Activated T-helper 2 cell treated with anti-CD3 and anti-CD28 coated beads, Interferon-gamma antibody, Interleukin-2, Interleukin-4, amounts not matched to agents 10 μg/mL and 5 μg/mL and 100 μg/mL, durations not matched to agents 14 hours and 24 hours and 36 hours (primary cell): ENCODE measurements at regions of chr20 and their contacts with region 1.

Region 1: GRCh38 chr20:59087829-59088433 is 45.3 kb upstream of the PRELID3B start:
- DNase-seq: peak; percentile 67
- H3K4me3 Mint-ChIP-seq: no peak overlapping the region
- H3K27ac Mint-ChIP-seq: no peak overlapping the region
- H3K4me1 Mint-ChIP-seq: peaks cover 1% of the 10 kb centered on the region
- H3K27me3 Mint-ChIP-seq: peaks cover 35% of the 10 kb centered on the region

Region 2: DNA sequence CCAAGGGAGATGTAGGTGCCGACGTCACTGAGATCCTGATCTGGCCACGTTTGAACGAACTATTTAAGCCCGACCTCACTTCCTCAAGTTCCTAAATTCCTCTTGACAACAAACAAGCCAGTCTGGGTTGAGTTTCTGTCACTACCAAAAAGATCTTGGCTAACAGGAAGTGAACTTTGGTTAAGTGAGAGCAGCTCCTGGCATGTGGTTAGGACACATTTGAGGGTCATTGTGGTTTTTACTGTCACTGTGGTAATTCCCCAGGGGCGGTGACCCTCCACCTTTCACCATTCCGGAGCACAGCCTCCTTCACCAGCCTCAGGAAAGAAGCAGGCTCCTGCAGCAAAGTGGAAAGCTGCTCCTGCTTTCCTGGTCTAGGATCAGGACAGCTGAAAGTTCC is 32.6 kb after region 1 on chr20:
- intact Hi-C with region 1: loop called (anchors 1 kb)
- DNase-seq: no peak
- H3K4me3 Mint-ChIP-seq: no peak overlapping the region
- H3K27ac Mint-ChIP-seq: peak overlapping the region; percentile 2
- H3K4me1 Mint-ChIP-seq: peaks cover 50% of the 10 kb centered on the region
- H3K27me3 Mint-ChIP-seq: peaks cover 4% of the 10 kb centered on the region

Region 3: DNA sequence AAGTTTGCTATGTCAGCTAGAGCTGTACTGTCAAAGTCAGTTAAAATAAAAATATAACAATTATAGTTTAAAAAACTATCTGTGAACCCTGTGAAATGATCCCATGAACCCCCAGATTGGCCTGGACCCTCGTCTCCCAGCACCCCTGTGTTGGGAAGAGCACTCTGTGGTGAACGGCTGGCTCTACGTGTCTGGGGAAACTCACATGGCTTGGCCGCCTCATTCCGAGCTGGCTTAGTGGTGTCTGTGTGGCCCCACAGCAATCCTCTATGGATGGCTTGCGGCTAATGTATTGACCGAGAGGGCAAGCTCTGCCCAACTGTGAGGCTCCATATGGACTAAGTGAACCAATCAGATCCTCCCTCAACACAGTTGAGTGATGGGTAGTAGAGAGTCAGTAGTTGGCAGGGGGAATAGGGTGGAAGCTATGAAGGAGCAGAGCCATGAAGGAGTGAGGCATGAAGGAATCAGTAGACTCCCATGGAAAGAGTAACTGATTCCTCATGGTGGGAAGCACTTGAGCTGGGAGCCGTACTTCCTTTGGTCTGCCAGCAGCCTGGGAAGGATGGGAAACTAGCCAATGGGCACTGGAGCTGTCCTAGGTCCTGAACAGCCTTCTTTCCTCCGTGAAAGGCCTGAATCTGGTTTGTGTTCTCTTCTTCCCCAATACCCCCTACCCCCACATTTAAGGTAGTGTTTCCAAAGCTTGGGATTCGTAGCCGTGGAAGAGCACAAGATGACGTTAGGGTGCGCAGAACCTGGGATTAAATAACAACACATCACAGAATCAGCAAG is 54.1 kb after region 1 on chr20:
- intact Hi-C with region 1: no loop called
- DNase-seq: no peak
- H3K4me3 Mint-ChIP-seq: no peak overlapping the region
- H3K27ac Mint-ChIP-seq: no peak overlapping the region
- H3K4me1 Mint-ChIP-seq: peaks cover 37% of the 10 kb centered on the region
- H3K27me3 Mint-ChIP-seq: peaks cover 2% of the 10 kb centered on the region

Region 4: GRCh38 chr20:59207742-59208357 is 119.9 kb after region 1 on chr20:
- intact Hi-C with region 1: loop called (anchors 1 kb)
- DNase-seq: peak; percentile 58
- H3K4me3 Mint-ChIP-seq: no peak overlapping the region
- H3K27ac Mint-ChIP-seq: no peak overlapping the region
- H3K4me1 Mint-ChIP-seq: peaks cover 2% of the 10 kb centered on the region
- H3K27me3 Mint-ChIP-seq: no peaks in the 10 kb centered on the region

Region 5: GRCh38 chr20:59222253-59223181 is 134.6 kb after region 1 on chr20:
- intact Hi-C with region 1: loop called (anchors 1 kb)
- DNase-seq: peak; percentile 71
- H3K4me3 Mint-ChIP-seq: peak overlapping the region; percentile 77
- H3K27ac Mint-ChIP-seq: no peak overlapping the region
- H3K4me1 Mint-ChIP-seq: peaks cover 13% of the 10 kb centered on the region
- H3K27me3 Mint-ChIP-seq: peaks cover 5% of the 10 kb centered on the region

Region 6: DNA sequence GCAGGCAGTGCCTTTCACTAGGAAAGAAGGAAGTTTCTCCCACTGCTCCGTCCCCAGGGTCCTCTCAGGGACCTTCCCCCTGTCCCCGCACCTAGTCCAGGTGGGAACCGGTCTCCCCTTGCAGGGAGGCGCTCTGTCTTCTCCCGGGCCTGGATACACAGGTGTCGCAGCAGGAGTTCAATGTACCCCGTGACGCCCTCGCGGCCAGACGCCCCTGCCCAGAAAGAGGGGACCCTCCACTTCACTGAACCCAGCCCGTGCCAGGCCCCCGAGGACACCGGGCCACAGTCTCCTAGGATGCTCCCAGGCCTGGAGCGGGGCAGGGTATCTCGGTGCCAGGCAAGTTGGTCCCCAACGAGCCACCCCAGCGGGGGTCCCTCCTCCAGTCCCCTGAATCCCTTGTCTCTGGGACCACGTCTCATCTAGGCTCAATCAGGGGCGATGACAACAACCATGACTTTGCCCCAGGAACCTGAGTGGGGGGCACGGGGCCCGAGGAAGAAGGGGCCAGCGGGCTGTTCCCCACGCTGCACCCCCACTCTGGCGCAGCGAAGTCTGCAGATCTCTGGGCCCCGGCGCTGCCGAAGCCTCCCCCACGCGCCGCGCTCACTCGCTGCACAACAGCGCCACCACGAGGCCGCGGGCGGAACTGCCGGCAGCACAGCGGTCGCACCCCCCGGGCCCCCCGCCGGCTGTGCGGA is 315.5 kb after region 1 on chr20:
- intact Hi-C with region 1: loop called (anchors 10 kb)
- DNase-seq: peak; percentile 55
- H3K4me3 Mint-ChIP-seq: no peak overlapping the region
- H3K27ac Mint-ChIP-seq: no peak overlapping the region
- H3K4me1 Mint-ChIP-seq: no peaks in the 10 kb centered on the region
- H3K27me3 Mint-ChIP-seq: peaks cover 14% of the 10 kb centered on the region